A549 (cell line): ENCODE measurements at regions of chr14 and their contacts with region 1.

Region 1: DNA sequence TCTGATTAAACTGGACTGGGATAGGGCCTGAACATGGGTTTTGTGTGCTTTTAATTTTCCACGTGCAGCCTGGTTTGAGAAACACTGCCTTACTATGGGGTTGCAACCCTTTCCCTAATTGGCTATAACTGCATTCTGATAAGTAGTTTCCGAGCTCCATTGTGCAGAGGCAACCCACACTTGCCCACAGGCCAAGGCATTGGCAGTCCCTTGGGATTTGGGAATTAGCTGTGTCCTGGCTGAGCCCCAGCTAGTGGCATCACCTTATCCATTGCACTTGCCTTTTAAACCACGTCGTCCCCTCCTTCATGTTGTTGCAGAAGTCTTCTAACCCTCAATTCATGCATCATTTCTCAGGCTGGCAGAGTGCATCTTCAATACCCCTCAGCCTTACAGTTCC is 10.2 kb downstream of the VCPKMT start:
- DNase-seq: no peak
- ATAC-seq: peak in 1 of 2 experiments; percentile 39; a peak in 3 of 6 replicates
- H3K4me3 ChIP-seq: no peak overlapping the region
- H3K27ac ChIP-seq: no peak overlapping the region
- H3K4me1 ChIP-seq: peaks cover 15% of the 10 kb centered on the region; the same call in 2 of the 3 replicates
- CTCF ChIP-seq: no peak
- EP300 ChIP-seq: no peak
- POLR2A ChIP-seq: no peak
- RAD21 ChIP-seq: no peak

Region 2: GRCh38 chr14:50085570-50086320 is 20.4 kb before region 1 on chr14:
- CTCF ChIA-PET with region 1: interaction called, 25 read pairs
- POLR2A ChIA-PET with region 1: no interaction called
- DNase-seq: no peak
- ATAC-seq: peak; percentile 36 to 59; a peak in 2 of 6 replicates
- H3K4me3 ChIP-seq: no peak overlapping the region
- H3K27ac ChIP-seq: no peak overlapping the region
- H3K4me1 ChIP-seq: 0 out of 3 replicates have a peak, but pooled peaks cover 7% of the 10 kb centered on the region
- CTCF ChIP-seq: no peak
- EP300 ChIP-seq: no peak
- POLR2A ChIP-seq: no peak
- RAD21 ChIP-seq: no peak

Region 3: GRCh38 chr14:50091240-50091913 is 14.8 kb before region 1 on chr14:
- CTCF ChIA-PET with region 1: interaction called, 25 read pairs
- POLR2A ChIA-PET with region 1: no interaction called
- DNase-seq: no peak
- ATAC-seq: peak in 1 of 2 experiments; percentile 17; a peak in 1 of 6 replicates
- H3K4me3 ChIP-seq: no peak overlapping the region
- H3K27ac ChIP-seq: no peak overlapping the region
- H3K4me1 ChIP-seq: 0 out of 3 replicates have a peak, but pooled peaks cover under 1% of the 10 kb centered on the region
- CTCF ChIP-seq: no peak
- EP300 ChIP-seq: no peak
- POLR2A ChIP-seq: no peak
- RAD21 ChIP-seq: no peak

Region 4: DNA sequence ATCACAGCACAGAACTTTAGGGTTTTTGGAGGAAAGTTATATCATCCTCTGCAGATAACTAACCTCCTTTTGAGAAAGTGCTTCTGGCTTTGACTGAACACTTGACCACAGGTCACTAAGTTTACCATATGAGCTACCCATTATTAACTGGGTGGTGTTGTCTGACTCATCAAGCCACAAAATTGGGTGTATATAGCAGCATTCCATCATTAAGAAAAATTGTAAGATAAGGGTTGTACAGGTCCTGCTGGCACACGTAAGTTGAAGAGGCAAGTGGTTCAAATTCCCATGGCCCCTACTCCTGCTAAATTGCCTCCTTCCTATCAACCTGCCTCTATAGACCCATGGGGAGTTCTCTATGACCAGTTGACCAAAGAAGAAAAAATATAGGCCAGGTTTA is 166.3 kb after region 1 on chr14:
- CTCF ChIA-PET with region 1: no interaction called
- POLR2A ChIA-PET with region 1: no interaction called
- DNase-seq: no peak
- ATAC-seq: no peak
- H3K4me3 ChIP-seq: no peak overlapping the region
- H3K27ac ChIP-seq: no peak overlapping the region
- H3K4me1 ChIP-seq: no peaks in the 10 kb centered on the region
- CTCF ChIP-seq: no peak
- EP300 ChIP-seq: no peak
- POLR2A ChIP-seq: no peak
- RAD21 ChIP-seq: no peak